ENCODE measurements at regions of chr4 and their contacts with region 1.

Region 1: GRCh38 chr4:163681208-163681821 is 186.8 kb downstream of the TMA16 start:
- DNase-seq: peak; percentile 55
- H3K4me3 Mint-ChIP-seq: no peak overlapping the region
- H3K27ac Mint-ChIP-seq: no peak overlapping the region
- H3K4me1 Mint-ChIP-seq: no peaks in the 10 kb centered on the region
- H3K27me3 Mint-ChIP-seq: no peaks in the 10 kb centered on the region
- CTCF ChIP-seq: peak; percentile 57

Region 2: GRCh38 chr4:163415668-163416067 is 265.6 kb before region 1 on chr4:
- CTCF ChIA-PET with region 1: no interaction called
- POLR2A ChIA-PET with region 1: no interaction called
- intact Hi-C with region 1: no loop called
- DNase-seq: no peak
- H3K4me3 Mint-ChIP-seq: no peak overlapping the region
- H3K27ac Mint-ChIP-seq: no peak overlapping the region
- H3K4me1 Mint-ChIP-seq: no peaks in the 10 kb centered on the region
- H3K27me3 Mint-ChIP-seq: no peaks in the 10 kb centered on the region
- CTCF ChIP-seq: no peak

Region 3: GRCh38 chr4:163748449-163748848 is 67.1 kb after region 1 on chr4:
- CTCF ChIA-PET with region 1: interaction called, 13 read pairs
- POLR2A ChIA-PET with region 1: no interaction called
- intact Hi-C with region 1: no loop called
- DNase-seq: peak; percentile 60
- H3K4me3 Mint-ChIP-seq: no peak overlapping the region
- H3K27ac Mint-ChIP-seq: no peak overlapping the region
- H3K4me1 Mint-ChIP-seq: peaks cover 6% of the 10 kb centered on the region
- H3K27me3 Mint-ChIP-seq: no peaks in the 10 kb centered on the region
- CTCF ChIP-seq: no peak

Region 4: GRCh38 chr4:163755013-163755412 is 73.7 kb after region 1 on chr4:
- CTCF ChIA-PET with region 1: interaction called, 11 read pairs
- POLR2A ChIA-PET with region 1: no interaction called
- intact Hi-C with region 1: loop called (anchors 2 kb)
- DNase-seq: peak; percentile 49
- H3K4me3 Mint-ChIP-seq: no peak overlapping the region
- H3K27ac Mint-ChIP-seq: no peak overlapping the region
- H3K4me1 Mint-ChIP-seq: no peaks in the 10 kb centered on the region
- H3K27me3 Mint-ChIP-seq: no peaks in the 10 kb centered on the region
- CTCF ChIP-seq: peak; percentile 38

Region 5: GRCh38 chr4:163846008-163846407 is 164.7 kb after region 1 on chr4:
- CTCF ChIA-PET with region 1: no interaction called
- POLR2A ChIA-PET with region 1: no interaction called
- intact Hi-C with region 1: no loop called
- DNase-seq: no peak
- H3K4me3 Mint-ChIP-seq: no peak overlapping the region
- H3K27ac Mint-ChIP-seq: no peak overlapping the region
- H3K4me1 Mint-ChIP-seq: no peaks in the 10 kb centered on the region
- H3K27me3 Mint-ChIP-seq: no peaks in the 10 kb centered on the region
- CTCF ChIP-seq: no peak

Region 6: GRCh38 chr4:164012396-164013027 is 331.2 kb after region 1 on chr4:
- CTCF ChIA-PET with region 1: interaction called, 19 read pairs
- POLR2A ChIA-PET with region 1: no interaction called
- intact Hi-C with region 1: loop called (anchors 1 kb)
- DNase-seq: peak; percentile 66
- H3K4me3 Mint-ChIP-seq: no peak overlapping the region
- H3K27ac Mint-ChIP-seq: no peak overlapping the region
- H3K4me1 Mint-ChIP-seq: no peaks in the 10 kb centered on the region
- H3K27me3 Mint-ChIP-seq: no peaks in the 10 kb centered on the region
- CTCF ChIP-seq: peak; percentile 55

Region 7: GRCh38 chr4:164748375-164748774 is 1067.1 kb after region 1 on chr4:
- CTCF ChIA-PET with region 1: interaction called, 5 read pairs
- POLR2A ChIA-PET with region 1: no interaction called
- intact Hi-C with region 1: loop called (anchors 5 kb)
- DNase-seq: peak; percentile 39
- H3K4me3 Mint-ChIP-seq: no peak overlapping the region
- H3K27ac Mint-ChIP-seq: no peak overlapping the region
- H3K4me1 Mint-ChIP-seq: peaks cover 6% of the 10 kb centered on the region
- H3K27me3 Mint-ChIP-seq: no peaks in the 10 kb centered on the region
- CTCF ChIP-seq: peak; percentile 41